Endothelial cell of umbilical vein (primary cell): ENCODE measurements at regions of chr10 and their contacts with region 1.

Region 1: DNA sequence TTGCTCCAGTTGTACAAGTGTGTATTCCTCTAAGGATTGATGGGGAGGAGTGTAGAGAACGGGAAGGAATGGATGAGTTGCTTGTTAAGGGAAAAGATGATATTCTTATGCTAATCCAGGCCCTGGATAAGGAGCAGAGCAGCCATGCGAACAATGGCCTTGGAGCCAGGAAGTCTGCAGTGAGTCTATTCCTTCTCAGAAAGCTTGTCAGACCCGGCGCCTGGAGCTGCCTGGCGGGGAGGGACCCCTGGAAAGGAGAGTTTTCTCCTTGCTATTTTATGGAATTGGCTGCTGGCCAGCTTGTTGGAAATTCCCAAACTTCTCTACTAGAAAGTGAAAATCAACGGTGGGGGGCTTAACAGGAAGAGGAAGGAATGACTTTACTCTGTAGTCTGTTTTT is 89.1 kb downstream of the MMRN2 start:
- DNase-seq: peak; percentile 94
- H3K4me3 ChIP-seq: peak overlapping the region in 1 of 3 experiments; percentile 19
- H3K27ac ChIP-seq: peak overlapping the region; percentile 36
- H3K4me1 ChIP-seq: peaks cover 18% of the 10 kb centered on the region
- H3K27me3 ChIP-seq: peaks cover 17 to 18% of the 10 kb centered on the region in 2 experiments
- CTCF ChIP-seq: no peak
- POLR2A ChIP-seq: no peak

Region 2: DNA sequence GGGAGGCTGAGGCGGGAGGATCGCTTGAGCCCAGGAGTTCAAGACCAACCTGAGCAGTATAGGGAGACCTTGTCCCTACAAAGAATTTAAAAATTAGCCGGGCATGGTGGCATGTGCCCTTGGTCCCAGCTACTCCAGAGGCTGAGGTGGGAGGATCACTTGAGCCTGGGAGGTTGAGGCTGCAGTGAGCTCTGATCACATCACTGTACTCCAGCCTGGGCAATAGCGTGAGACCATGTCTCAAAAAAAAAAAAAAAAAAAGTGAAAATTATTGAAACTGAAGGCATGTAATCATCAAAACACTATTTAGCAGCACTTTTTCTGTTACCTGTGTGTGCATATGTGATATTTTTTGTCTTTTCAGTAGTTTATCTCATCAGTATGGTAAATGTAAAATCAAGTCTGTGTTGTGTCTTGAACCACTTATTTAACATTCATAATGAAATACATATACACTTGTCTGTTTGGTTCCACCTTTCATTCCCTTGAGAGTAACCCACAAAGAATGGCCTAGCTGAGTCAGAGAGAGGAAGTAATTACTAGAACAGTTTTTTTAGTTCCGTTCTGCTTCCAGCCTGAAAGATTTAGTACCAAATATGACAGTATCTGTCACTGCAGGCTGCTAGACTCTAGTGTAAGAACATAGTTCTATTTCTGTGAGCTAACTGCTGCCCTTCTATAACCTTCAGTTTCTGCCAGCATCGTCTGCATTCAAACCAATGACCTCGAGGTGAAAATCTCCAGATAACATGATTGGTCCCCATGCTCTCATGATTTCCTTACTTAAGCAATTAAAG is 20.4 kb after region 1 on chr10:
- CTCF ChIA-PET with region 1: interaction called, 4 read pairs
- POLR2A ChIA-PET with region 1: no interaction called
- dilution Hi-C with region 1: no loop called
- intact Hi-C with region 1: loop called (anchors 1 kb)
- DNase-seq: peak; percentile 51
- H3K4me3 ChIP-seq: no peak overlapping the region
- H3K27ac ChIP-seq: no peak overlapping the region
- H3K4me1 ChIP-seq: no peaks in the 10 kb centered on the region
- H3K27me3 ChIP-seq: peaks cover 18 to 24% of the 10 kb centered on the region in 2 experiments
- CTCF ChIP-seq: no peak
- POLR2A ChIP-seq: no peak